Activated B cell treated with CpG ODN at 0.5 μM for 24 hours (primary cell): ENCODE measurements at regions of chr20 and their contacts with region 1.

Region 1: GRCh38 chr20:57709931-57710799 is at the start of gene PMEPA1:
- DNase-seq: peak; percentile 95
- ATAC-seq: peak; percentile 86
- H3K4me3 Mint-ChIP-seq: peak within 1 kb of the TSS; percentile 99
- H3K27ac Mint-ChIP-seq: peak within 1 kb of the TSS; percentile 92
- H3K4me1 Mint-ChIP-seq: peaks cover 59% of the 10 kb centered on the region
- H3K27me3 Mint-ChIP-seq: no peaks in the 10 kb centered on the region
- CTCF ChIP-seq: no peak
- total RNA-seq, gene PMEPA1: 33.1 and 34.8 TPM in 2 replicates

Region 2: DNA sequence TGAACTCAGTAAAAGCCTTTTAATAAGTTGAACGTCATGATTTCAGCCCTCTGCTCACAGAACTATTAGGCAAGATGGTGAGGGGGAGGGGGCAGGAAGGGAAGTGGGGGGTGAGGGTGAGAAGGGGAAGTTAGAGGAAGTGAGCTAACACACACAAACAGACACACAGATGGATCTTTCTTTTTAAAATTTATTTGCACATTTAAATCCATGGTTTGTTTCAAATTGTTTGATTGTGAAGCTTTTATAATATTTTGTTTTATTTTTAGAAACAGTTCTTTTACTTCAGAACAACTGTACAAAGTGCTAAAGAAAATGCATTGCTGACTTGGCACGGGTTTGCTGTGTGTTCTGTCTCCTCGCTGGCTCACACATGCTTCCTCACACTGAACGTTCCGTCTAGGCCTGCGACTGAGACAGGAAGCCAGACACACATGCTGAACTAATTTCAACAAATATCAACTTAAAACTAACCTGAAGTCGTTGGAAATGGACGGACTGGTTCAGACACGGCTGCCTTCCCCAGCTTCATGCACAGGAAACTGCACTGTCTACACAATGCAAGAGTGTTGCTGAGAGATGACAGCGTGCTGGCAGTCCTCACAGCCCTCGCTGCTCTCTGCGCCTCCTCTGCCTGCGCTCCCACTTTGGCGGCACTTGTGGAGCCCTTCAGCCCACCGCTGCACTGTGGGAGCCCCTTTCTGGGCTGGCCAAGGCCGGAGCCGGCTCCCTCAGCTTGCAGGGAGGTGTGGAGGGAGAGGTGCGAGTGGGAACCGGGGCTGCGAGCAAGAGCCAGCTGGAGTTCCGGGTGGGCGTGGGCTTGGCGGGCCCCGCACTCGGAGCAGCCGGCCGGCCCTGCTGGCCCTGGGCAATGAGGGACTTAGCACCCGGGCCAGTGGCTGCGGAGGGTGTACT is 81.9 kb before region 1 on chr20:
- CTCF ChIA-PET with region 1: no interaction called
- POLR2A ChIA-PET with region 1: interaction called, 9 read pairs
- intact Hi-C with region 1: loop called (anchors 2 kb)
- DNase-seq: no peak
- ATAC-seq: peak; percentile 81
- H3K4me3 Mint-ChIP-seq: peak overlapping the region; percentile 81
- H3K27ac Mint-ChIP-seq: peak overlapping the region; percentile 98
- H3K4me1 Mint-ChIP-seq: peaks cover 39% of the 10 kb centered on the region
- H3K27me3 Mint-ChIP-seq: peaks cover 12% of the 10 kb centered on the region
- CTCF ChIP-seq: no peak

Region 3: DNA sequence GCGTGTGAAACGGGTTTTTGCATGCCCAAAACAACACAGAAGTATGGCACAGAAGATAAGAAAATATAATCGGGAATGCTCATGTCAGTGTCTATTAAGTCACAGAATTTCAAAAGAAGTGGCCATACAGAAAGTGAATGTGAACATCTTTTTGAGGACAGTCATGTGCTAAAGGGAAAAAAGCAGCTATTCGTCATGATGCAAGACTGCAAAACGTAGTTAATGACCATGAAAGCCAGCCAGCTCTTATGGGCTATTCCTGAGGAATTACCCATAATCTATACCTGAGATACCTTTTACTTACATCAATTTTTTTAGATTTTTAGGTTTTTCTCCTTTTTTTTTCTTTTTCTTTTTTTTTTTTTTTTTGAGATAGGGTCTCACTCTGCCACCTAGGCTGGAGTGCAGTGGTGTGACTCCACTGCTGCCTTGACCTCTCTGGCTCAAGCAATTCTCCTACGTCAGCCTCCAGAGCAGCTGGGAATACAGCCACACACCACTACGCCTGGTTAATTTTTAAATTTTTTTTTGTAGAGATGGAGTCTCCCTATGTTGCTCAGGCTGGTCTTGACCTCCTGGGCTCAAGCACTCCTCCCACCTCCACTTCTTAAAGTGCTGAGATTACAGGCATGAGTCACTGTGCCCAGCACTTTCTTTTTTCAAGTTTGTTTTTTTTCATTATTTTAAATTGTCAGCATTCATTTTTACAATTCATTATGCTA is 71.8 kb before region 1 on chr20:
- CTCF ChIA-PET with region 1: no interaction called
- POLR2A ChIA-PET with region 1: no interaction called
- intact Hi-C with region 1: no loop called
- DNase-seq: no peak
- ATAC-seq: no peak
- H3K4me3 Mint-ChIP-seq: no peak overlapping the region
- H3K27ac Mint-ChIP-seq: no peak overlapping the region
- H3K4me1 Mint-ChIP-seq: no peaks in the 10 kb centered on the region
- H3K27me3 Mint-ChIP-seq: peaks cover 32% of the 10 kb centered on the region
- CTCF ChIP-seq: no peak

Region 4: DNA sequence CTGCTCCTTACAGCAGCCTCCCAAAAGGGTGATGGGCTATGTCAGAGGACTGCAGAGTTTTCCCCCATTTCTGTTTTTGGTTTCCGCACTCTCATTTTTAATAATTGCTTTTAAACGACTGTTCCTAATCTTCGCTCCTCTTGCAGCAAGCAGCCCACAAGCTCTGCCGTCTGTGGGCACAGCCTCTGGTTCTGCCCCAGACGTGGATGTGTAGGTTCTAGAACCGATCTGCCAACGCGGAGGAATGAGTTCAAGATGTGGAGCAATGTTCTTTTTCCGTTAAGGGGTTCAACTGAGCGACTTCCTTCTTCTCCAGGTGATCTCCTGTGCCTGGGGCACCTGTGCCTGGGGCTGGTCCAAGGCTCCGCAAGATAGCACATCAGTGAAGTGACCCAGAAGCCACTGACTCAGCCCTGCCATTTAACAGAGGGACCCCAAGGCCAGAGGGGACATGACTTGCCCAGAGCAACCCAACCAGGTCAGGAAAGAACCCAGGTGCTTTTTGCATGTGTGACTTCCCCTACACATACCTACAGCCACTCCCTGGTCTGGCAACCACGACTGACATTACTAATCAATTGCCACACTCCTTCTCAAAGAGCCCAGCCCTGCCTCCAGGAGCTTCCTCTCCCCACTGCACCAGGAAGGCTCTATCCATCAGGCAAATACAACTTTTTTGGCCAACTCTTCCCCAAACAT is 23.1 kb before region 1 on chr20:
- CTCF ChIA-PET with region 1: interaction called, 48 read pairs
- POLR2A ChIA-PET with region 1: interaction called, 154 read pairs
- intact Hi-C with region 1: loop called (anchors 1 kb)
- DNase-seq: no peak
- ATAC-seq: peak; percentile 53
- H3K4me3 Mint-ChIP-seq: peak overlapping the region; percentile 45
- H3K27ac Mint-ChIP-seq: peak overlapping the region; percentile 57
- H3K4me1 Mint-ChIP-seq: peaks cover 95% of the 10 kb centered on the region
- H3K27me3 Mint-ChIP-seq: no peaks in the 10 kb centered on the region
- CTCF ChIP-seq: no peak

Region 5: DNA sequence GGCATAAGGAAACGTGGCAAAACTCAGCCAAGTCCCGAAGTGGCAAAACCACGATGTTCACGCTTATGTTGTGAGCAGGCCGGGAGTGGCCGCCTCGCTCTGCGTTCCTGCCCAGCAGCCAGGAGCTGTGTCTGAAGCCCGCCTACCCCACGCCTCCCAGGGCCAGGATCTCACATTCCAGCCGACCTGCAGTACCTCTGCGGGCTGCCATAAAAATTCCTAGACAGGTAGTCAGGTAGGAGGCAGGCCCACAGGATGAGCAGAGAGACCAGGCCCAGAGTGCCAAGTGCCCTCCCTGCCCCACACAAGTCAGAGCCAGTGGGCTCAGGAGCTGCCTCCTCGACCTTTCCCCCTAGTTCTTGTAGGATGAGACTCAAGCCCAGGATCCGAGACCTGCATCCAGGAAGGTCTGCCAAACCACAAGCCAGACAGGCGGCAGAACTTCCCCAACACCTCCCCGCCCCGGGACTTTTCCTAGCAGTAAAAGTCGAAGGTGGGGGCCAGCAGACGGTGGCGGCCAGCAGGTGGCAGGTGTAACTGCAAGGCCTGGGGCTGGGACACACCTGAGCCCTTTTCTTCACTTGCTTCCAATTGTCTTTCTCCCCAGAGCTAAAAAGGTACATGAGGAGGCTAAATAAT is 17.0 kb before region 1 on chr20:
- CTCF ChIA-PET with region 1: interaction called, 16 read pairs
- POLR2A ChIA-PET with region 1: interaction called, 22 read pairs
- intact Hi-C with region 1: no loop called
- DNase-seq: no peak
- ATAC-seq: no peak
- H3K4me3 Mint-ChIP-seq: no peak overlapping the region
- H3K27ac Mint-ChIP-seq: no peak overlapping the region
- H3K4me1 Mint-ChIP-seq: peaks cover 92% of the 10 kb centered on the region
- H3K27me3 Mint-ChIP-seq: no peaks in the 10 kb centered on the region
- CTCF ChIP-seq: no peak